Mammary epithelial cell (primary cell): ENCODE measurements at regions of chr17 and their contacts with region 1.

Region 1: GRCh38 chr17:78140169-78140976 is 5.8 kb upstream of the C17orf99 start:
- DNase-seq: peak; percentile 81
- H3K4me3 ChIP-seq: peak overlapping the region in 1 of 3 experiments; percentile 9
- H3K27ac ChIP-seq: no peak overlapping the region
- H3K4me1 ChIP-seq: peaks cover 32% of the 10 kb centered on the region
- H3K27me3 ChIP-seq: no peaks in the 10 kb centered on the region
- CTCF ChIP-seq: no peak

Region 2: DNA sequence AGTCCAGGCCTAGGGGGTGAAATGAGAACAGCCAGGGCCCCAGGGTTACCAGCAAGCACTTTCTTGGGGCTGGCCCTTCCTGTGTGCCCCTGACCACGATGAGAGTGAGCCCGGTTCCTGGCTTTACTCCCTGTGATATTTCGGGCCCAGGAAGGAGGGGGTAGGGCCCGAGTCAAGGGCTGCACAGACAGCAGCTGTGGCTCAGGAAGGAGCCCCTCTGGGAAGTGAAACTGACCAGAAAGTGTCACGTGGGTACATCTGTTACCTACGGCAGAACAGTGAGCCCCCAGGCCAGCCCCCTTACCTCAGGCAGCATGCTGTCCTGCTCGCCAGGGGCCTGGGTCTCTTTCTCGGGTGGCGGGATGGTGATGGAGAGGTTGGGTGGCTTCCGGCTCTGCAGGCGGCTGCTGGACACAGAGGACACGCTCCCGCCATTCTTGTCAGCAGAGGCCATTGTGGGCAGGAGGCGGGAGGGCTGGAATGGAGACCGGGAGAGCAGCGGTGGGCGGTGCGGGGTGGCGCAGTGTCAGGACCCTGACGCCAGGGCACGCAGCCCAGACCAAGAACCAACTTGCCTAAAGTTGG is 1659.2 kb before region 1 on chr17:
- CTCF ChIA-PET with region 1: no interaction called
- dilution Hi-C with region 1: no loop called
- in situ Hi-C with region 1: no loop called
- intact Hi-C with region 1: no loop called
- DNase-seq: no peak
- H3K4me3 ChIP-seq: no peak overlapping the region
- H3K27ac ChIP-seq: no peak overlapping the region
- H3K4me1 ChIP-seq: peaks cover 6% of the 10 kb centered on the region
- H3K27me3 ChIP-seq: no peaks in the 10 kb centered on the region
- CTCF ChIP-seq: no peak

Region 3: GRCh38 chr17:78034429-78035091 is 105.8 kb before region 1 on chr17:
- CTCF ChIA-PET with region 1: no interaction called
- dilution Hi-C with region 1: loop called (anchors 5 kb)
- in situ Hi-C with region 1: no loop called
- intact Hi-C with region 1: no loop called
- DNase-seq: peak; percentile 57
- H3K4me3 ChIP-seq: no peak overlapping the region
- H3K27ac ChIP-seq: peak overlapping the region; percentile 38
- H3K4me1 ChIP-seq: peaks cover 24% of the 10 kb centered on the region
- H3K27me3 ChIP-seq: no peaks in the 10 kb centered on the region
- CTCF ChIP-seq: no peak

Region 4: GRCh38 chr17:78154903-78155811 is 14.8 kb after region 1 on chr17:
- CTCF ChIA-PET with region 1: interaction called, 5 read pairs
- dilution Hi-C with region 1: no loop called
- in situ Hi-C with region 1: no loop called
- intact Hi-C with region 1: loop called (anchors 1 kb)
- DNase-seq: peak; percentile 78
- H3K4me3 ChIP-seq: no peak overlapping the region
- H3K27ac ChIP-seq: no peak overlapping the region
- H3K4me1 ChIP-seq: peaks cover 12% of the 10 kb centered on the region
- H3K27me3 ChIP-seq: no peaks in the 10 kb centered on the region
- CTCF ChIP-seq: no peak